Left ventricle myocardium inferior (tissue), 1 donor: ENCODE measurements at regions of chr3 and their contacts with region 1.

Region 1: GRCh38 chr3:82133070-82133606 is 371.7 kb upstream of the GBE1 start:
- DNase-seq: peak; percentile 55
- H3K4me3 ChIP-seq: no peak overlapping the region
- H3K27ac ChIP-seq: no peak overlapping the region
- H3K4me1 ChIP-seq: peaks cover 3% of the 10 kb centered on the region
- H3K27me3 ChIP-seq: no peaks in the 10 kb centered on the region
- CTCF ChIP-seq: peak; percentile 93

Region 2: GRCh38 chr3:81676706-81677456 is 456.3 kb before region 1 on chr3:
- intact Hi-C with region 1: loop called (anchors 10 kb)
- DNase-seq: no peak
- H3K4me3 ChIP-seq: no peak overlapping the region
- H3K27ac ChIP-seq: no peak overlapping the region
- H3K4me1 ChIP-seq: peaks cover 11% of the 10 kb centered on the region
- H3K27me3 ChIP-seq: no peaks in the 10 kb centered on the region
- CTCF ChIP-seq: no peak

Region 3: DNA sequence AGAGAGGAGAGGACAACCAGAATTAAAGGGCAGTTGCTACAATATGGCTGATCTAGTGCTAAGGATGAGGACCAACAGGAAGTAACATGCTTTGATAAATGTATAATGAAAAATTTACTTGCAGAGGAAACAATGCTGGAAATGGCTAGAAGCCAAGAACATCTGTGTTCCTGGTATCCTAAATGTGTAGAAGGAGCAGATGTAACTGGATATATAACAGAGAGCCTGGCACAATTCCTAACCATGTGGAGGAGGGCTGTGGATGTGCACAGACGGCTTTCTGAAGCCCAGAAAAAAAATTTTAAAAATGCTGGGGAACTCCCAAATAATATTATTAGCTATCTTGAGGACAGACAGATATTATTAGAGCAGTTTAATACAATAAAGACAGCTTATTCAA is 212.3 kb before region 1 on chr3:
- intact Hi-C with region 1: no loop called
- DNase-seq: no peak
- H3K4me3 ChIP-seq: no peak overlapping the region
- H3K27ac ChIP-seq: no peak overlapping the region
- H3K4me1 ChIP-seq: no peaks in the 10 kb centered on the region
- H3K27me3 ChIP-seq: no peaks in the 10 kb centered on the region
- CTCF ChIP-seq: no peak